Posterior vena cava (tissue), 2 donors: ENCODE measurements at regions of chr17 and their contacts with region 1.

Region 1: DNA sequence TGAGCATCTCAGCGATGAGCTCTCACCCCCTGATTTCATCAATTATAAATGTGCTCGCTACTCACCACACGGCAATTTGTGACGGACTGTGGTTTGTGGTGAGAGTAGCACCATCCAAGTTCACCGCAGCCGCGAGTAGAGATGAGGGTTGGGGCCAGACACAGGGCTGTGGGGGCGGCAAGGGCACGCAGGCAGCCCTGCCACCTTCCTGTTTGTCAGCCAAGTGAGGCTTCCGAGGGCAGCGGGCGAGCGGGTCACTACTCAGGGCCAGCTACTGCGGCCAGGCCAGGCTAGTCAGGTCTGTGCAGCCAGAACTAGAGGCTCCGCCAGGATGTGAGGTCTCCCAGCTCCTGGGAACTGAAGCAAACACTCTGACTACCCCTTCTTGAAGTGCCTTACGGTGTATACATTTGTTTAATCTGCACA is 39.6 kb upstream of the MEOX1 start:
- DNase-seq: no peak

Region 2: GRCh38 chr17:43483674-43484372 is 217.5 kb before region 1 on chr17 and contains the start of gene DHX8:
- intact Hi-C with region 1: no loop called
- DNase-seq: peak; percentile 99
- total RNA-seq, gene DHX8: 35.2 to 45.2 TPM

Region 3: GRCh38 chr17:43857942-43858600 is 156.7 kb after region 1 on chr17:
- intact Hi-C with region 1: loop called in 1 of 2 experiments (anchors 10 kb)
- DNase-seq: peak; percentile 68